Heart right ventricle (tissue), 16 donors: ENCODE measurements at regions of chr4 and their contacts with region 1.

Region 1: DNA sequence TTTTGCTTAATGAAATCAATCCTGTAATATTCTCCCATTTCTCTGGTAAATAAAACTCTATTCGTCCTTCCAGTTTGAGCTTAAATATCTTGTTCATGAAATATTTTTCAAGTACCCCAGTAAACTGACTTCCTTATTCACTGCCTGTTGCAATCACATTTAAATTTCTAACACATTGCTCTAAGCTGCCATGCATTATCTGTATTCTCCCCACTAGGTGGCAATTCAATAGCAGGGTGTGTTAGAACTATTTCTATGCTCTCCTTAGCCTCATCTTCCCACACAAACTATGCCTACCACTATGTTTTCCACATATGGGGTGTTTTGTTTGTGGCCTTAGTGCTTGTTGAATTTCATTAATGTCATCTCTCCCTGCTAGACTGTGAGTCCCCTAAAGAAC is 377.1 kb upstream of the HS3ST1 start:
- DNase-seq: no peak
- ATAC-seq: peak in 7 of 8 donors; percentile 55 to 86 (median 74)
- H3K4me3 ChIP-seq: no peak overlapping the region
- H3K27ac ChIP-seq: no peak overlapping the region
- H3K4me1 ChIP-seq: no peaks in the 10 kb centered on the region
- H3K27me3 ChIP-seq: no peaks in the 10 kb centered on the region
- CTCF ChIP-seq: peak; percentile 46 to 71 (median 59)

Region 2: DNA sequence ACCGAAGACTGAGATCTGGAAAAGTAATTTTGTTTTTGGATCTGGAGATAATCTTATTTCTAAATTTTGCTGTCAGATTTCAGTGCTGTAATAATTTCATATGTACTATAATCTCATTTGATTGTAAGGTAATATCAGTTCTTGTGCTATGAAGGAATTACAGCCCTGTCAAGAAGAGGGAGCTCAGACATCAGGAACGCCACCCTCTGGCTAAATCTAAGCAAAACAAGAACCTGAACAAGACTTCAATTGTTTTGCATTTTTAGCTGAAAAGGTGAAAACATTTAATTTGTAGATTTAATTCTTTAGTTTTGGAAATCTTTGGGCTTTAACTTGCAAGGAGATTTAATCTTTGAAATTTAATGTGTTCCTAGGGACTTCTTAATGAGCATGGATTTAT is 148.3 kb after region 1 on chr4:
- intact Hi-C with region 1: loop called in 7 of 10 experiments (anchors 5 to 10 kb)
- DNase-seq: no peak
- ATAC-seq: peak in 2 of 8 donors; percentile 50 to 52
- H3K4me3 ChIP-seq: no peak overlapping the region
- H3K27ac ChIP-seq: no peak overlapping the region
- H3K4me1 ChIP-seq: no peaks in the 10 kb centered on the region
- H3K27me3 ChIP-seq: no peaks in the 10 kb centered on the region
- CTCF ChIP-seq: peak; percentile 4 to 69 (median 53)